Activated T-helper 2 cell treated with anti-CD3 and anti-CD28 coated beads, Interferon-gamma antibody, Interleukin-2, Interleukin-4, amounts not matched to agents 10 μg/mL and 5 μg/mL and 100 μg/mL, durations not matched to agents 14 hours and 24 hours and 36 hours (primary cell): ENCODE measurements at regions of chr9 and their contacts with region 1.

Region 1: DNA sequence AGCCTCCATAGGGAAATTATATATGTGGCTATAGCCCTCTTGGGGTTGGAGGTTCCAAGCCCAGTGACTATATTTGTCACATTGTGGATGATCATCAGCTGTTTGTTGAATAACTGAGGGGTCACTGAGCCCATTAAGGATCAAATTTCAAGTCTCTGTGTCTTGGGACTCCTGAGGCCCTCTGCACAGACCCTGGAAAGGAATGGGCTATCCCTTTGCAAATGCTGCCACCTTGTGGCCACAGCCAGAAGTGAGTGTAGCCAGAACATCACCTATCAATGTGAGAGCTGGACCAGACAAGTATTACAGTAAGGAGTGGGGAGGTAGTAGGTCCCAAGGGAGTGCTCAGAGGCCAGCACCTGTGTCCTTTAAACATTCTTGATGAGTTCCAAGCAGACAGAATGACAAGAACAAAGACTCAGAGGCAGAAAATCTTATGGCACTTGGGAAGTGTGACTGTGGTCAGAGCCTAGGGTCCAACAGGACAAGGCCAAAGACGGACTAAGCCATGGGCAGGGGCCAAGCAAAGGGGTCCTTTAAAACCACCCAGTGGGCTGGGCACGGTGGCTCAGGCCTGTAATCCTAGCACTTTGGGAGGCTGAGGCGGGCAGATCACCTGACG is 8.2 kb downstream of the RPP25L start:
- DNase-seq: peak; percentile 66
- H3K4me3 Mint-ChIP-seq: no peak overlapping the region
- H3K27ac Mint-ChIP-seq: no peak overlapping the region
- H3K4me1 Mint-ChIP-seq: no peaks in the 10 kb centered on the region
- H3K27me3 Mint-ChIP-seq: peaks cover 16% of the 10 kb centered on the region

Region 2: GRCh38 chr9:34546834-34547827 is 56.6 kb before region 1 on chr9:
- intact Hi-C with region 1: loop called (anchors 2 kb)
- DNase-seq: peak; percentile 18
- H3K4me3 Mint-ChIP-seq: no peak overlapping the region
- H3K27ac Mint-ChIP-seq: no peak overlapping the region
- H3K4me1 Mint-ChIP-seq: no peaks in the 10 kb centered on the region
- H3K27me3 Mint-ChIP-seq: peaks cover 13% of the 10 kb centered on the region

Region 3: GRCh38 chr9:34637356-34638137 is 33.8 kb after region 1 on chr9 and contains the start of gene SIGMAR1:
- intact Hi-C with region 1: loop called (anchors 5 kb)
- DNase-seq: peak; percentile 93
- H3K4me3 Mint-ChIP-seq: peak within 1 kb of the TSS; percentile 97
- H3K27ac Mint-ChIP-seq: peak within 1 kb of the TSS; percentile 86
- H3K4me1 Mint-ChIP-seq: peaks cover 31% of the 10 kb centered on the region
- H3K27me3 Mint-ChIP-seq: no peaks in the 10 kb centered on the region
- total RNA-seq, gene SIGMAR1: 105 and 109 TPM in 2 replicates